Left ventricle myocardium inferior (tissue), 1 donor: ENCODE measurements at regions of chr16 and their contacts with region 1.

Region 1: GRCh38 chr16:15829460-15829859 is 27.4 kb downstream of the MYH11 start:
- DNase-seq: peak; percentile 52
- H3K4me3 ChIP-seq: no peak overlapping the region
- H3K27ac ChIP-seq: no peak overlapping the region
- H3K4me1 ChIP-seq: no peaks in the 10 kb centered on the region
- H3K27me3 ChIP-seq: peaks cover 31% of the 10 kb centered on the region
- CTCF ChIP-seq: no peak

Region 2: DNA sequence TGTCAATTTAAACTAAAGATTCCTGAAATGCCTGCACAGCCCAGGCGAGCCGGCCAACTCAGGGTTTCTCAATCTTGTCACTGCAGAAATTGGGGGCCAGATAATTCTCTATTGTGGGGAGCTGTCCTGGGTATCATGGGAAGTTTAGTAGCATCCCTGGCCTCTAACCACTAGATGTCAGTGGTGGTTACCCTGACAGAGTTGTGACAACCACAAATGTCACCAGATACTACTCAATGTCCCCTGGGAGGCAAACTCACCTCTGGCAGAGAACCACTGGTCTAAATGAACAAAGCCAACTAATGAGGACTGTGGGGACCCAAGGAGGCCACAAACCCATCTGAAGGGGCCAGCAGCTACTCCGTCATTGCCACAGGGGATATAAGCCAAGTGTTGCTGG is 63.6 kb before region 1 on chr16:
- intact Hi-C with region 1: loop called (anchors 5 kb)
- DNase-seq: no peak
- H3K4me3 ChIP-seq: no peak overlapping the region
- H3K27ac ChIP-seq: no peak overlapping the region
- H3K4me1 ChIP-seq: peaks cover 13% of the 10 kb centered on the region
- H3K27me3 ChIP-seq: peaks cover 29% of the 10 kb centered on the region
- CTCF ChIP-seq: peak; percentile 75

Region 3: DNA sequence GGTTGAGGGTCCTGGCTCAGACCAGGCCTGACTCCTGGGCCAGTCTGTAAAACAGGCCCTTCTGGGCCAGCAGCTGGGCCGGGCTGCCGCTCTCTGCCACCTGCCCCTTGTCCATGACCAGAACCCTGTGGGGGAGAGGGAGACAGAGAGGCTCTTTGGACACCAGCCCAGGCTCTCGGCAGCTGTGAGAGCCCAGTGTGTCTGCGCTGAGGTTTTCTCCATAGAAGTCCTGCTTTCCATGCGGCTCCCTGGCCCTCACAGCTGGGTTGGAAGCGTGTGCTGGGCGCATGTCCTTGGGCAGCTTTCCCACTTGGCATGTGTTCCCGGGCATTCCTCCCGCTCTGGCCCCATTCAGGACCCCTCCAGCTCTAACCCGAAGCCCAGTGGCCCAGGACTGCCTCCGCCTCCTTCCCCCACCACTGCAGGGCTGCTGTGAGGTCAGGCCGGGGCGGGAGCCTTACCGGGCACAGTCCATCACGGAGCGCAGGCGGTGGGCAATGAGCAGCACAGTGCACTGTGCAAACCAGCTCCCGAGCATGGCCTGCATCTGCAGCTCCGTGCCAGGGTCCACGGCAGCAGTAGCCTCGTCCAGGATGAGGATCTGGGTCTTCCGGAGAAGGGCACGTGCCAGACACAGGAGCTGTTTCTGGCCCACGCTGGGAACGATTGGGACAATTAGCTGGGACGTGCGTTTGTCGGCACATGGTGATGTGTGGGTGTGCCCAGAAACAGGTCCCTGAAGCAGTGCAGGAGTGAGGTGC is 320.8 kb after region 1 on chr16:
- intact Hi-C with region 1: no loop called
- DNase-seq: peak; percentile 76
- H3K4me3 ChIP-seq: peak overlapping the region; percentile 16
- H3K27ac ChIP-seq: peak overlapping the region; percentile 71
- H3K4me1 ChIP-seq: peaks cover 26% of the 10 kb centered on the region
- H3K27me3 ChIP-seq: no peaks in the 10 kb centered on the region
- CTCF ChIP-seq: no peak